ENCODE measurements at regions of chr13 and their contacts with region 1.

Region 1: DNA sequence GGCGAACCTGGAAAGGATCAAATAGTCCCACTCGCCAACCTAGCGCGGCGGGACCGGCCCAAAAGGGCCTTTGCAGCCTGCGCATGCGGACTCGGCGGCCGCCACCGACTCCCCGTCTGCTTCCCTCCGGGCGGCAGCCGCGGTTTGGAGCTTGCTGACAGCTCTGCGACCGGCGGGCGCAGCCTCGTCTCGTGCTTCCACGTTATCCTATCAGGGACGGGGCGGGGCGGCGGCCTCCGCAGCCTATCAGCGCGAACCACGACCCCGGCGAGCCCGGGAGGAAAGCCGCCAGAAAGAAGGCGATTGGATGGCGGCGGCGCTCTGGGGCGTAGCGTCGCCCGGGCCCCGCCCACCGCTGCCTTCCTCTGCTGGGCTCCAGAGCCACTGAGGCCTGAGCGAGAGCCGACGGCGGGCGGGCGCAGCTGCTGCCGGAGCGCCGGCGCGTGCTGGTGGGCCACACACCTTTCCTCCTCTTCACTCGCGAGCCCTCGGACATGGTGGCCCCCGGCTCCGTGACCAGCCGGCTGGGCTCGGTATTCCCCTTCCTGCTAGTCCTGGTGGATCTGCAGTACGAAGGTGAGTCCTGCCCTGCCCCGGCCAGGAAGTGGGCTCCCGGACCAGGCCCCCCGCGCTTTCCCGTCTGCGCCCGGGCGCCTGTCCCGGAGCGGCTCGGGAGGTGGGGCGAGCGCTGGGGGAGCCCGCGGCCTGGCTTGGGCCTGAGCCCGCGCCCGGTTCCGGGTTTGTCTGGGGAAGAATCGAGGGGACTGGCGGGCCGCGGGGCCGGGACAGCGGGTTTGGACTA is at the start of gene DNAJC3:
- DNase-seq: peak; percentile 96
- ATAC-seq: peak; percentile 97
- H3K4me3 ChIP-seq: peak within 1 kb of the TSS; percentile 85
- H3K27ac ChIP-seq: peak within 1 kb of the TSS; percentile 86
- H3K4me1 ChIP-seq: peaks cover 2% of the 10 kb centered on the region; the same call in 1 of the 2 replicates
- H3K27me3 ChIP-seq: no peaks in the 10 kb centered on the region
- CTCF ChIP-seq: no peak
- POLR2A ChIP-seq: peak; percentile 95
- RAD21 ChIP-seq: no peak
- total RNA-seq, gene DNAJC3: 28.5 and 51.4 TPM in 2 replicates

Region 2: DNA sequence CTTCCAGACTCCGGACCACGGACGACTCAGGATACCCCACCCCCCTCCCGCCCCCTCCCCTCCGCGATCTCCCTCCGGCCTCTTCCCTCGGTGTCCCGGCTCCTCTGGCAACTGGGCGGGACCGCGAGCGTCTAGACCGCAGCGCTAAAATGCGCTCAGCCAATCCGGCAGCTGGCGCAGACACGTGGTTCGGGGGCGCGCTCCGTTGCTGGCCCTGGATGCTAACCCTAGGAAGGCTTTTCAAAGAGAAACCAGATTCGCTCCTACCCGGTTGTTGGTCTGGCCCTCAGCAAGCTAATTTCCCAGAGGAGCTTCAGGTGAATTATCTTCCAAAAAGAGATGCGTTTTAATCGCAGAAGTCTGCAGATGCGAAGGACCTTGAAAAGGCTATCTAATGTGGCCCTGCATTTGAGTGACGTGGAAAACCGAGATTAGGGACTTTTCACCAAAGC is 32.3 kb before region 1 on chr13 and contains the start of gene DZIP1:
- CTCF ChIA-PET with region 1: no interaction called
- POLR2A ChIA-PET with region 1: interaction called, 4 read pairs
- dilution Hi-C with region 1: no loop called
- in situ Hi-C with region 1: no loop called
- intact Hi-C with region 1: loop called (anchors 2 kb)
- DNase-seq: peak; percentile 83
- ATAC-seq: peak; percentile 88
- H3K4me3 ChIP-seq: peak within 1 kb of the TSS; percentile 50
- H3K27ac ChIP-seq: peak within 1 kb of the TSS; percentile 80
- H3K4me1 ChIP-seq: peaks cover 10% of the 10 kb centered on the region
- H3K27me3 ChIP-seq: no peaks in the 10 kb centered on the region
- CTCF ChIP-seq: no peak
- POLR2A ChIP-seq: peak; percentile 81
- RAD21 ChIP-seq: no peak
- total RNA-seq, gene DZIP1: 12.2 and 16.9 TPM in 2 replicates

Region 3: GRCh38 chr13:95771905-95772304 is 94.9 kb after region 1 on chr13:
- CTCF ChIA-PET with region 1: no interaction called
- POLR2A ChIA-PET with region 1: no interaction called
- dilution Hi-C with region 1: no loop called
- in situ Hi-C with region 1: no loop called
- intact Hi-C with region 1: loop called (anchors 10 kb)
- DNase-seq: no peak
- ATAC-seq: no peak
- H3K4me3 ChIP-seq: no peak overlapping the region
- H3K27ac ChIP-seq: no peak overlapping the region
- H3K4me1 ChIP-seq: peaks cover 1% of the 10 kb centered on the region; the same call in 1 of the 2 replicates
- H3K27me3 ChIP-seq: no peaks in the 10 kb centered on the region
- CTCF ChIP-seq: no peak
- POLR2A ChIP-seq: no peak
- RAD21 ChIP-seq: no peak

Region 4: DNA sequence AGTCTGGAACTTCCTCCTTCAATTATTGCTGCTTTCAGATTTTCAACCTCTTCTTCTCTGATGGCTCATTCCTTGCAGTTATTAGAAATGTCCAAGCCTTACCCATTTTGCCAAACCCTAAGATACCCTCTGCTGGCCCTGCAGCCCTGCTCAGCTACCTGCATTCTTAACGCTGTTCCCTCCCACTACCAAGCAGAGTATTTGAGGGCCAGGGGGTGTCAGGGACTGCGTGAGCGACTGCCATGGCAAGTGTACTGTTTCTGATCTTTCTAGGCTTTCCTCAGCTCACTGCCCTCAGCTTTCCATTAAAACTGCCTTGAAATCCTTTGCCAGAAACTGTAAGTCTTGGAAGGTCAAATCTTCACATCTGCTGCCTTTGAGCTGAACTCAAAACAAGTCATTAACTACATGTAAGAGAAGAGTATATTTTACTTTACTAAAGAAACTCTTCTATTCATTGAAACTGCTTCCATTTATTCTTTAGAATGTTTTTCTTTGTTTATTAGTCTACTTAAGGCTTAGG is 453.9 kb after region 1 on chr13:
- CTCF ChIA-PET with region 1: no interaction called
- POLR2A ChIA-PET with region 1: no interaction called
- dilution Hi-C with region 1: no loop called
- in situ Hi-C with region 1: no loop called
- intact Hi-C with region 1: no loop called
- DNase-seq: no peak
- ATAC-seq: no peak
- H3K4me3 ChIP-seq: no peak overlapping the region
- H3K27ac ChIP-seq: no peak overlapping the region
- H3K4me1 ChIP-seq: no peaks in the 10 kb centered on the region
- H3K27me3 ChIP-seq: no peaks in the 10 kb centered on the region
- CTCF ChIP-seq: no peak
- POLR2A ChIP-seq: no peak
- RAD21 ChIP-seq: no peak